ENCODE measurements at regions of chr9 and their contacts with region 1.

Region 1: DNA sequence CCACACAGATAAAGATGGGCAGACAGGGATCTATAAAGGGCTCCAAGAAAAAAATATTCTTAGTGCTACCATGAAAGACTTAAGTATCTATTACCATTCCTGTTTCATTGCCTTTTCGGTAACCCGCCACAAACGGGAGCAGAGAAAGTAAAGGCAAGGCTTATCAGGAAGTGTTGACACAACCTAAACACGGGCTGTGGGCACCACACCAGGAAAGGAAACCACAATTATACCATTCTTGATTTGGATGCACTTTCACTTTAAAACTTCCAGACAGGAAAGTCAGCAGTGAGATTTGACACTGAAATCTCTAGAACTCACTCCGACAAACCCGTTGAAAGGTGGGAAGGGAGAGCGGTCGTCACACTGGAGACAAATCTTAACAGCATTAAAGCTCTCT is 6.5 kb downstream of the TLE1 start:
- DNase-seq: no peak
- ATAC-seq: peak in 1 of 4 experiments; percentile 43
- H3K4me3 ChIP-seq: no peak overlapping the region
- H3K4me3 Mint-ChIP-seq: peak overlapping the region in 1 of 3 donors; percentile 35
- H3K27ac ChIP-seq: no peak overlapping the region
- H3K27ac Mint-ChIP-seq: no peak overlapping the region
- H3K4me1 ChIP-seq: peaks cover 7 to 10% of the 10 kb centered on the region in 2 experiments
- H3K4me1 Mint-ChIP-seq: peaks cover 9 to 19% (median 14%) of the 10 kb centered on the region in 3 donors
- H3K27me3 ChIP-seq: peaks cover 5 to 20% of the 10 kb centered on the region in 2 experiments
- H3K27me3 Mint-ChIP-seq: peaks cover 9 to 21% of the 10 kb centered on the region in 2 donors

Region 2: DNA sequence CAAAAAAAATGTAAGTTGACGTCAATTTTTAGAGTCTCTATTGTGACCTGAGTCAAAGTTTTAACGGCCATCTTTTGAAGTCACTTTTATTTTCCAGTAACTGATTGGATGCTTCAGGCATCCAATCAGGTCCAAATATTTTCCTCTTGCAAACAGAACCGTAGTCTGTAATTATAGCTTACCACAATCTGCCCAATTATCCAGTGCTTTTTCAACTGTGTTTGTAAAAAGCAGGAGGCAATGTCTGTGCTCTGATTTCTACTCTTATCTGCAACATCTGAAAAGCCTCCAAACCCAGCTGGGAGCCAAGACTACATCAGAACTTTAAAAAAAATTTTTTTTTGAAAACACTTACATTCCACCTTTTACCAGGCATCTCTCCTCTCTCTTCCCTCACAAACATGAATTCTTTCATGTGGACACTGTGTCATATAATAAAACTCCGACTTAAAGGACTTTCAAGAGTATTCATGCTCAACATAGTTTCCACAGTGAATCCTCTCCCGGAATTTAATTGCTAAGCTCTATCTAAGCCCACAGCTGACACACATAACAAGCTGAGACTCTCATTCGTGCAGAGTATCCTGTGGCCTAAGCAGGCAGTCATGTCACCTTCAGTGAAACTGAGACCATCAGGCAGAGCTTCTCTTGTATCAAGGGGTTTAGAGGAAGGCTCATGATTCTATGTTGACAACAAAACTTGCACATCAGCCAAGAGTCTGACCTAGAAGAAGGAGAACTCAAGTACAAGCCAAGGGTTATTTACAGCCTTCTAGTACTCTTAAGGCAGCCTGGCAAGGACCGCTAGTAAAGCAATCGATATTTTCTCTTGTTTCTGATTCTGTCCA is 266.1 kb before region 1 on chr9:
- CTCF ChIA-PET with region 1: no interaction called
- POLR2A ChIA-PET with region 1: no interaction called
- DNase-seq: no peak
- ATAC-seq: no peak
- H3K4me3 ChIP-seq: no peak overlapping the region
- H3K4me3 Mint-ChIP-seq: no peak overlapping the region
- H3K27ac ChIP-seq: no peak overlapping the region
- H3K27ac Mint-ChIP-seq: no peak overlapping the region
- H3K4me1 ChIP-seq: no peaks in the 10 kb centered on the region
- H3K4me1 Mint-ChIP-seq: no peaks in the 10 kb centered on the region
- H3K27me3 ChIP-seq: no peaks in the 10 kb centered on the region
- H3K27me3 Mint-ChIP-seq: no peaks in the 10 kb centered on the region

Region 3: GRCh38 chr9:81729135-81729534 is 46.3 kb after region 1 on chr9:
- CTCF ChIA-PET with region 1: no interaction called
- POLR2A ChIA-PET with region 1: no interaction called
- DNase-seq: no peak
- ATAC-seq: no peak
- H3K4me3 ChIP-seq: no peak overlapping the region
- H3K4me3 Mint-ChIP-seq: peak overlapping the region in 1 of 3 donors; percentile 9
- H3K27ac ChIP-seq: no peak overlapping the region
- H3K27ac Mint-ChIP-seq: no peak overlapping the region
- H3K4me1 ChIP-seq: no peaks in the 10 kb centered on the region
- H3K4me1 Mint-ChIP-seq: no peaks in the 10 kb centered on the region
- H3K27me3 ChIP-seq: no peaks in the 10 kb centered on the region
- H3K27me3 Mint-ChIP-seq: no peaks in the 10 kb centered on the region

Region 4: GRCh38 chr9:81759668-81760215 is 76.9 kb after region 1 on chr9:
- CTCF ChIA-PET with region 1: no interaction called
- POLR2A ChIA-PET with region 1: no interaction called
- DNase-seq: no peak
- ATAC-seq: no peak
- H3K4me3 ChIP-seq: no peak overlapping the region
- H3K4me3 Mint-ChIP-seq: no peak overlapping the region
- H3K27ac ChIP-seq: no peak overlapping the region
- H3K27ac Mint-ChIP-seq: no peak overlapping the region
- H3K4me1 ChIP-seq: no peaks in the 10 kb centered on the region
- H3K4me1 Mint-ChIP-seq: no peaks in the 10 kb centered on the region
- H3K27me3 ChIP-seq: no peaks in the 10 kb centered on the region
- H3K27me3 Mint-ChIP-seq: no peaks in the 10 kb centered on the region

Region 5: GRCh38 chr9:82201196-82201595 is 518.4 kb after region 1 on chr9:
- CTCF ChIA-PET with region 1: no interaction called
- POLR2A ChIA-PET with region 1: interaction called in 1 of 2 experiments, 15 read pairs
- DNase-seq: no peak
- ATAC-seq: no peak
- H3K4me3 ChIP-seq: no peak overlapping the region
- H3K4me3 Mint-ChIP-seq: no peak overlapping the region
- H3K27ac ChIP-seq: no peak overlapping the region
- H3K27ac Mint-ChIP-seq: no peak overlapping the region
- H3K4me1 ChIP-seq: no peaks in the 10 kb centered on the region
- H3K4me1 Mint-ChIP-seq: no peaks in the 10 kb centered on the region
- H3K27me3 ChIP-seq: no peaks in the 10 kb centered on the region
- H3K27me3 Mint-ChIP-seq: no peaks in the 10 kb centered on the region